Psoas muscle (tissue), 8 donors: ENCODE measurements at regions of chr17 and their contacts with region 1.

Region 1: DNA sequence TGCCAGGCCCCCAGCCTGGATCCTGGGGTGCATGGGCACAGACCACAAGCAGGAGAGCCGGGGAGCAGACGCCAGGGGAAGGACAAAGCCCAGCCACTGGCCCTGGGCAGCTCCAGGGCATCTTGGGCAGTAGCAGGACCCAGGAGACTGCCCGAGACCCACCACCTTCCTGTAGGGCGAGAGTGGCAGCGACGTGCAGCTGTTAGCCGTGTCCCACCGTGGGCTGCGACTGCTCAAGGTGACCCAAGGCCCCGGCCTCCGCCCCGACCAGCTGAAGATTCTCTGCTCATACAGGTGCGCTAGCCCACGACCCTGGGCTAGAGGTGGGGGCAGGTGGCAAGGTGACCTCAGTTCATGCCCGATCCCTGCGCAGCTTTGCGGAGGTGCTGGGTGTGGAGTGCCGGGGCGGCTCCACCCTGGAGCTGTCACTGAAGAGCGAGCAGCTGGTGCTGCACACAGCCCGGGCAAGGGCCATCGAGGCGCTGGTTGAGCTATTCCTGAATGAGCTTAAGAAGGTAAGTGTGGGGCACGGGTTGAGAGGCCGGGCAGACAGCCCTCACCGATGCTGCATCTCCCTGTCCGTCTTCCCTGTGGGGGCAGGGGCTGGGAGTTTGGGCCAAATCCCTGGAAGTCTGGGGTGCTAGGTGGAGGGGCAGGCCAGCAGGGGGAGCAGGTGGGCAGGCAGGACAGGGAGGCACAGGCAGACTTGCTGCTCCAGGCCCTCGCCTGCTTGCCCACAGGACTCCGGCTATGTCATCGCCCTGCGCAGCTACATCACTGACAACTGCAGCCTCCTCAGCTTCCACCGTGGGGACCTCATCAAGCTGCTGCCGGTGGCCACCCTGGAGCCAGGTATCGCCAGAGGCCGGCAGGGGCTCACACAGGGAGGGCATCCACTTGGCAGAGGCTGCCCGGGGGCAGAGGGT is 13.5 kb upstream of the SMIM5 start:
- DNase-seq: no peak
- ATAC-seq: peak in 2 of 4 donors; percentile 40 to 55
- H3K4me3 ChIP-seq: no peak overlapping the region
- H3K27ac ChIP-seq: no peak overlapping the region
- H3K4me1 ChIP-seq: peaks cover 7% of the 10 kb centered on the region
- H3K27me3 ChIP-seq: no peaks in the 10 kb centered on the region
- CTCF ChIP-seq: no peak

Region 2: DNA sequence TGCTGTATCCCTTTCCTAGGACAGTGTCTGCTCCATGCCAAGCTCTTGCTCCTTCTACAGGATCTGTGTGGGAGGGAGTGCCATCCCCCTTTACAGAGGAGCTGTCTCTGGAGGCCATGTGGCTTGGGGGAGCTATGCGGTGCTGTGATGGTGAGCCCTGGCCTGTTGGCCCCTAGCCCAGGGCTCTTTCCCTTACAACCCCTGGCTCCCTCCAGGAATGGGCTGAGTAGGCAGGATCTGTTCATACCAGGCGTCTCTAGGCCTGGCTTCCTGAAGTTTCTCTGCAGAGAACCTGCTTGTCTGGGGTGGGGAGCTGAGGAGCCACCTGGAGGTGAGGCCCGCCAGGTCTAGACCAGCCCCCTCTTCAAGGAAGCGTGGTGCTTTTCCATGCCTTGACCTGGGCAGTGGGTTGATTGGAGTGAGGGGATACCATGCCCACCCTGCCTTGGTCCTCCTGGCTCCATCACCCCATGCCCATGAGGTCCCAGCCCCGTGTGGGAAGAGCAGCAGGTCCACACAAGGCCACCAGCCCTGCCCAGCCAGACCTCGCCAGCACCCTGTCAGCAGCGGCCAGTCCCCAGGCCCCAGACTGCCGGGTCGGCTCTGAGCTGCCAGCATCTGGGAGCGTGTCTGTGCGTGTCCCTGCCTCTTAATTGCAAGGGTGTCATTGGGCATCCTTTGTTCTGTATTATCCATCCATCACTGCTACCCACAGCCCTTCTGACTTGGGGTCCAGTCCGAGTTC is 79.6 kb before region 1 on chr17:
- intact Hi-C with region 1: loop called in 1 of 2 experiments (anchors 5 kb)
- DNase-seq: no peak
- ATAC-seq: no peak
- H3K4me3 ChIP-seq: no peak overlapping the region
- H3K27ac ChIP-seq: no peak overlapping the region
- H3K4me1 ChIP-seq: no peaks in the 10 kb centered on the region
- H3K27me3 ChIP-seq: no peaks in the 10 kb centered on the region
- CTCF ChIP-seq: no peak